A549 (cell line): ENCODE measurements at regions of chr2 and their contacts with region 1.

Region 1: GRCh38 chr2:85302121-85302520 is 25.7 kb downstream of the TGOLN2 start:
- DNase-seq: no peak
- ATAC-seq: no peak; a peak in 1 of 6 replicates
- H3K4me3 ChIP-seq: no peak overlapping the region
- H3K27ac ChIP-seq: no peak overlapping the region
- H3K4me1 ChIP-seq: no peaks in the 10 kb centered on the region
- CTCF ChIP-seq: no peak
- EP300 ChIP-seq: no peak
- POLR2A ChIP-seq: no peak
- RAD21 ChIP-seq: no peak

Region 2: GRCh38 chr2:85042330-85042729 is 259.8 kb before region 1 on chr2:
- CTCF ChIA-PET with region 1: interaction called, 12 read pairs
- POLR2A ChIA-PET with region 1: no interaction called
- DNase-seq: no peak
- ATAC-seq: no peak; a peak in 1 of 6 replicates
- H3K4me3 ChIP-seq: no peak overlapping the region
- H3K27ac ChIP-seq: no peak overlapping the region
- H3K4me1 ChIP-seq: 0 out of 3 replicates have a peak, but pooled peaks cover 5% of the 10 kb centered on the region
- CTCF ChIP-seq: no peak
- EP300 ChIP-seq: no peak
- POLR2A ChIP-seq: no peak
- RAD21 ChIP-seq: no peak

Region 3: DNA sequence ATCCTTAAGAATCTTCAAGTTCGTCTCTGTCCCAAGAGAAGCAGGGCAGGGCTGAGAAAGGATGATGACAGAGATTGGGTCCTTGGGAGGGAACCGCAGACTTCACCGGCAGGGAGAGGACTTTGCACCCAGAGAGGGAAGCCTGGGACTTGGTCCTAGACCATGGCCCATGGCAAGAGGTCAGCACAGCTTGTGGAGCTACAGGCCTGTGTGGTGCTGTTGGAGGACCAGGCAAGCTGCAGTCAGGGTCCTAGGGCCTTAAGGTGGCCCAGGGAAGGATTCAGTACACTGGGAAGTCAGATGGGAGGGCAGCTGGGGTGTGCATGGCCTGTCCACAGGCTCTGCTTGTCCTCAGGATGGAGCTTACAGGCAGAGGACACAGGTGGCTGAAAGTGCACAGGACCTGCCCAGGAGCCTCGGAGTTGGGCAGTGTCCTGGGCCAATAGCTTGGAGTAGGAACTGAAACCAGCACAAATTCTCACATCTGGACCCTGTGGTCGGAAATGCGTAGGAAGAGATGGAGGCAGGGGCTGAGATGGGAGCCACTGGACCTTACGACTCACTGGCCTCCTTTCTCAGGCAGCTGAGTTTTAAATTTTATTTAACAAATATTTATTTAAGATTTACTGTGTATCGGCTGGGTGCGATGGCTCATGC is 225.4 kb before region 1 on chr2:
- CTCF ChIA-PET with region 1: interaction called, 34 read pairs
- POLR2A ChIA-PET with region 1: no interaction called
- DNase-seq: no peak
- ATAC-seq: peak; percentile 24 to 48; a peak in 3 of 6 replicates
- H3K4me3 ChIP-seq: no peak overlapping the region
- H3K27ac ChIP-seq: no peak overlapping the region
- H3K4me1 ChIP-seq: no peaks in the 10 kb centered on the region
- CTCF ChIP-seq: no peak
- EP300 ChIP-seq: no peak
- POLR2A ChIP-seq: no peak
- RAD21 ChIP-seq: no peak

Region 4: DNA sequence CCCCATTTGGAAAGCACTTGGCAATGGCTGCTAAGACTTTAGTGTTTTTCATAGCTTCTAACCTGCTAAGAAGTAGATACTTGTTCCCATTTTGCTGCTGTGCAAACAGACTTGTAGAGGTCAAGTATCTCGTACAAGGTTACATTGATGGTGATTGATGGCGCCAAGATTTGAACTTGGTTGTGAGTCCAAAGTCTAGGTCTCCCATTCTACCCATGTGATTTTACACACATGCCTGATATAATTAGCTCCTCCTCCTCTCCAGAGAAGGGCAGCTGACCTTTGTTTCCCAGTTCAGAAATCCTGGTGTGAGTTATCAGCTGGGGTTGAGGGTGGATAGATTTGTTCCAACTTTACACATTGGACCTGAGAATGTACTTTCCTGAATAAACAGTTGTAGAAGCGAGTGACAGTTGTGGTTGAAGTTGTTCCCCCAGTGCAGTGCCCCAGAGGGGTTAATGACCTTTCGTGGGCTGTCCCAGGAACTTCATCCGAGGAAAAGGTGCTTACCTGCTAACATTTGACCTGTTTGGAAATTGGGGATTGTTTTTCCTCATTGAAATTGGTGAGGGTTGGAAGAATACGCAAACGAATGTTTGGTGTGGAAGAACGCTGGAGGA is 158.5 kb before region 1 on chr2:
- CTCF ChIA-PET with region 1: interaction called, 10 read pairs
- POLR2A ChIA-PET with region 1: no interaction called
- DNase-seq: no peak
- ATAC-seq: no peak
- H3K4me3 ChIP-seq: no peak overlapping the region
- H3K27ac ChIP-seq: no peak overlapping the region
- H3K4me1 ChIP-seq: no peaks in the 10 kb centered on the region
- CTCF ChIP-seq: no peak
- EP300 ChIP-seq: no peak
- POLR2A ChIP-seq: no peak
- RAD21 ChIP-seq: no peak

Region 5: GRCh38 chr2:85266146-85267041 is 35.7 kb before region 1 on chr2:
- CTCF ChIA-PET with region 1: interaction called, 56 read pairs
- POLR2A ChIA-PET with region 1: no interaction called
- DNase-seq: peak; percentile 67 to 74
- ATAC-seq: peak in 1 of 2 experiments; percentile 93; a peak in 3 of 6 replicates
- H3K4me3 ChIP-seq: no peak overlapping the region
- H3K27ac ChIP-seq: no peak overlapping the region
- H3K4me1 ChIP-seq: no peaks in the 10 kb centered on the region
- CTCF ChIP-seq: peak; percentile 92
- EP300 ChIP-seq: no peak
- POLR2A ChIP-seq: no peak
- RAD21 ChIP-seq: peak; percentile 55 to 68

Region 6: GRCh38 chr2:85288244-85288725 is 13.8 kb before region 1 on chr2:
- CTCF ChIA-PET with region 1: interaction called, 183 read pairs
- POLR2A ChIA-PET with region 1: no interaction called
- DNase-seq: peak; percentile 82 to 86
- ATAC-seq: peak; percentile 78 to 83
- H3K4me3 ChIP-seq: no peak overlapping the region
- H3K27ac ChIP-seq: peak overlapping the region; percentile 62 to 82
- H3K4me1 ChIP-seq: peaks cover 31% of the 10 kb centered on the region
- CTCF ChIP-seq: no peak
- EP300 ChIP-seq: no peak
- POLR2A ChIP-seq: no peak
- RAD21 ChIP-seq: no peak

Region 7: DNA sequence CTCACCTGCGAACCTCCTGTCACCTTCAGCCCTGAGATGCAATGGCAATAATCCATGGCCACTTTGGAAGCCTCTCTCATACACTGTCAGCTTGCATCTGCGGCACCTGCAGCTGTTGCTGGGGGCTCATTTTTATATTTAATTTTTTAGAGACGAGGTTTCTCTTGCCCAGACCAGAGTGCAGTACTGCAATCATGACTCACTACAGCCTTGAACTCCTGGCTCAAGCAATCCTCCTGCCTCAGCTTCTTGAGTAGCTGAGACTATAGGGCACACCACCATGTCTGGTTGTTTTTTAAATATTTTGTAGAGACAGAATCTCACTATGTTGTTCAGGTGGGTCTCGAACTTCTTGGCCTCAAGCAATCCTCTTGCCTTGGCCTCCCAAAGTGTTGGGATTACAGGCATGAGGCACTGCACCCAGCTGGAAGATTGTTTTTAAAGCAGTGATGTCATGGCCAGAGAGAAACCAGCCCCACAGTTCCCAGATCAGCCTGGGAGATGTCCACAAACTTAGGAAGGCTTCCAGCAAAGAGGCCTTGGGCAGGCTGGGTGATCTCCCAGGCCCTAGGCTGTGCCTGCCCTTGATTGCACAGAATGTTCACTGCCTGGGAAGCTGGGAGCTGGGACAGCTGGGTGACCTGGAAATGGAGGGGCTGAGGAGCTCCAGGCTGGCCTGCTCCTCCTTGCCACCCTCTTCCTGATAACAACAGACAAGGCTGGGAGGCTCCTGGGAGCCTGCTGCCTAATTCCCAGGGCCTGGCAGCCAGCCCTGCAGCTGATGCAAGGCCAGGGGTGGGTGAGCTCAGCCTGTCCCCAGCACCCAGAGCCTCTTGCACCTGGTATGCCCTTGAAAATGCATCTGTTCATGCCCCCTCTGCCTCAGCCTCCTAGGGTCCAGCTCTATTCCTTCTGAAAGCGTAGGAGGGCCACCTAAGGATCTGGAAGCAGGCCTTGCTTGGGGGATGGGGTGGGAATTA is 143.5 kb after region 1 on chr2:
- CTCF ChIA-PET with region 1: no interaction called
- POLR2A ChIA-PET with region 1: no interaction called
- DNase-seq: peak in 1 of 2 experiments; percentile 67
- ATAC-seq: peak; percentile 68 to 76
- H3K4me3 ChIP-seq: no peak overlapping the region
- H3K27ac ChIP-seq: peak overlapping the region; percentile 84 to 92
- H3K4me1 ChIP-seq: peaks cover 30% of the 10 kb centered on the region
- CTCF ChIP-seq: no peak
- EP300 ChIP-seq: no peak
- POLR2A ChIP-seq: no peak
- RAD21 ChIP-seq: no peak

Region 8: GRCh38 chr2:85551698-85552678 is 249.9 kb after region 1 on chr2:
- CTCF ChIA-PET with region 1: interaction called, 12 read pairs
- POLR2A ChIA-PET with region 1: no interaction called
- DNase-seq: peak in 1 of 2 experiments; percentile 87
- ATAC-seq: peak; percentile 52 to 64
- H3K4me3 ChIP-seq: no peak overlapping the region
- H3K27ac ChIP-seq: peak overlapping the region; percentile 34 to 45; a peak in 5 of 6 replicates
- H3K4me1 ChIP-seq: peaks cover 10% of the 10 kb centered on the region
- CTCF ChIP-seq: peak; percentile 98
- EP300 ChIP-seq: no peak
- POLR2A ChIP-seq: no peak
- RAD21 ChIP-seq: peak; percentile 99 to 100